Dorsolateral prefrontal cortex (tissue), 120 donors: ENCODE measurements at regions of chr7 and their contacts with region 1.

Region 1: DNA sequence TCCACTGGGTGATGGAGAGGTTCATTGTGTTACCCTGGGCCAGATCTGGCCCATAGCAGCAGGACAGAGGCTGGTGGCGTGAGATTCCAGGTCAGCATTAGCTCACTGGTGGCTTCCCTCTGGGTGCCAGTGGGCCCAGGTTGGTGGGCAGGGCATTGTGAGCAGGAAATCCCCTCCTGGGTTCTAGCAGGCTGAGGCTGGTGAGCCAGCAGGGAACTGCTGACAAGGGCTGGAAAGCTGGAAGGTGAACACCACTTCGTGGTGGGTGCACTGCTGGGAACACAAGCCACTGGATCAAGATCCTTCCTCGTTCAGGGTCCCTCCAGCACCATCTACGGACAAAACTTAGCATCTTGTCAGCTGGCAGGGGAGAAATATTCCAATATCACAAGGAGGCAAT is 259.2 kb upstream of the FZD1 start:
- DNase-seq: no peak
- H3K4me3 ChIP-seq: no peak overlapping the region
- H3K27ac ChIP-seq: peak overlapping the region in 19 of 59 donors; percentile 4 to 49 (median 27)
- H3K27me3 ChIP-seq: no peaks in the 10 kb centered on the region
- CTCF ChIP-seq: no peak

Region 2: DNA sequence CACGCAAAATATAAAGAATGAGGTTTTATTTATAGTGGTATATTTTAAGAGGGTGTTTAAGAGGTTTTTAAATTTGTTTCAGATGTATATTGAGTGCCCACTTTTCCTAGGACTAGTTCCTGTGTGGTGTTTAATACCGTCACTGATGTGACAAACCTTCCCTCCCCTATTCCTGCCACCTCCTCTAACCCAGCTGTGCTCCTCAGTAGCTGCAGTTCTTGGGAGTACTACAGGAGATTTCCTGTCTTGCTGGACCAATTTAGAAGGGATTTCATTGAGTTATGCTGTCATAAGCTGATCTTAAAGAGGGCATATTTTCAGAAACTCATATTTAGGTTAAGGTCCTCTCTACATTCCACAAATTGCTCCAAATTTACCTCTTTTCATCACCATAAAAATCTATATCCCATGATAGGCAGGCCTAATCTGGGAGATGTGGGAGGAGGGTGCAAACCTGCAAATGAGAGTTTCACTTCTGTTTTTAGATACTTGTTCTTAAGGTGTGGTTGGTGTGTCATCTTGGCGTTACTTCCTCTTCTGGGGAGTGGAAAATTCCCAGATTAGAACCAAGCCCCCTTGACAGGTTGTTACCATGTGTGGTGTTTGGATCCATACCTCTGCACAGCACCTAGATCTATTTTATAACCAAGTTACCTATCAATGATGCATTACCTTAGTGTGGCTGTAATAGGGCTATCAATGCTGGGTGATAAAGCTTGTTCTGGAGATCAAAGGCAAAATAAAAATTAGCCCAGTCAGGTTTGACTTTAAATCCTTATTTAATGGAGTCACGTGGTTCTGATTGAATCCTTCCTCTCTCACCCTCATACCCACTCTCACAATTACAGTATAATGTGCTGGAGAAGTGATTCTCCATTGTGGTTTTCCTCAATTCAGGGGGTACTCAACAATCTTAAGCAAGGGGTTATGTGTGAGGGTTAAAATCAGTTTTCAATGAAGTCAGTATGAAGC is 267.8 kb before region 1 on chr7:
- intact Hi-C with region 1: loop called in 1 of 2 experiments (anchors 5 kb)
- DNase-seq: no peak
- H3K4me3 ChIP-seq: no peak overlapping the region
- H3K27ac ChIP-seq: peak overlapping the region in 4 of 59 donors; percentile 2 to 81 (median 30)
- H3K27me3 ChIP-seq: no peaks in the 10 kb centered on the region
- CTCF ChIP-seq: no peak